CD14-positive monocyte (primary cell): ENCODE measurements at regions of chr4 and their contacts with region 1.

Region 1: GRCh38 chr4:99816545-99817308 is at the start of gene DAPP1:
- DNase-seq: peak; percentile 75 to 91 (median 84)
- H3K4me3 ChIP-seq: peak within 1 kb of the TSS; percentile 79 to 99 (median 90)
- H3K4me3 Mint-ChIP-seq: peak within 1 kb of the TSS; percentile 92 to 99
- H3K27ac ChIP-seq: peak within 1 kb of the TSS; percentile 85 to 94
- H3K27ac Mint-ChIP-seq: peak within 1 kb of the TSS; percentile 94 to 99 (median 96)
- H3K4me1 ChIP-seq: peaks cover 66 to 72% of the 10 kb centered on the region in 2 donors
- H3K4me1 Mint-ChIP-seq: peaks cover 66% of the 10 kb centered on the region
- H3K27me3 ChIP-seq: no peaks in the 10 kb centered on the region
- H3K27me3 Mint-ChIP-seq: no peaks in the 10 kb centered on the region
- CTCF ChIP-seq: no peak
- polyA plus RNA-seq, gene DAPP1: 63.1 to 125 (median 87.2) TPM

Region 2: GRCh38 chr4:99855678-99856077 is 39.0 kb after region 1 on chr4:
- intact Hi-C with region 1: loop called (anchors 2 to 5 kb)
- DNase-seq: peak; percentile 80 to 90 (median 89)
- H3K4me3 ChIP-seq: peak overlapping the region; percentile 7 to 66 (median 41)
- H3K4me3 Mint-ChIP-seq: peak overlapping the region in 1 of 2 donors; percentile 39
- H3K27ac ChIP-seq: peak overlapping the region; percentile 7 to 90
- H3K27ac Mint-ChIP-seq: peak overlapping the region; percentile 89 to 99 (median 97)
- H3K4me1 ChIP-seq: peaks cover 76 to 90% of the 10 kb centered on the region in 2 donors
- H3K4me1 Mint-ChIP-seq: peaks cover 80% of the 10 kb centered on the region
- H3K27me3 ChIP-seq: no peaks in the 10 kb centered on the region
- H3K27me3 Mint-ChIP-seq: peaks cover 0 to 1% (median 0%) of the 10 kb centered on the region in 3 donors
- CTCF ChIP-seq: no peak

Region 3: DNA sequence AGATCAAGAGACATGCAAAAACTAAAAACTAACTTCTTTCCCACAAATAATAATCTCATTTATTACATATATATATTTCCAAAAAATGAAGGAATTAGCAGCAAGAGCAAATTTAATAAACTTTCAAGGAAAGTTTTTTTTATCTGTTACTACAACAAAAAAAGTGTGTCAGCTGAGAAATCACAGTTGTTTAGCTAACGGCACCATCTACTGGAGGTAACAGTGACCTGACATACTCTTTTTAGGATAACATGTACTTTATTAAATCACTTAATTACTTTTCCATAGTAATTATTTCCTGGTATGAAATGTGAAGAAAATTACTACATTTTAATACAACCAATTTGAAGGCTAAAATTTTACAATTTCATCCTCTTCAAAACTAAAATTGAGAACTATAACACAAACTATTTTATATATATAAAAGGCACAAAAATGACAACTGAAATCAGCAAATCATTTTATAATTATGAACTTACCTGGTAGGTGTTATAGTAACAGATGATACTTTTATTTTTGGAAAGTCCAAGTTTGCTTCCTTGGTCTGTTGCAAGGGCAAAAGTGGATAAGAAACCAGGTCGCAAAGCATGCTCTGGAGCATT is 68.4 kb after region 1 on chr4:
- intact Hi-C with region 1: loop called (anchors 5 to 10 kb)
- DNase-seq: peak; percentile 28 to 56 (median 48)
- H3K4me3 ChIP-seq: no peak overlapping the region
- H3K4me3 Mint-ChIP-seq: no peak overlapping the region
- H3K27ac ChIP-seq: no peak overlapping the region
- H3K27ac Mint-ChIP-seq: no peak overlapping the region
- H3K4me1 ChIP-seq: no peaks in the 10 kb centered on the region
- H3K4me1 Mint-ChIP-seq: peaks cover 6% of the 10 kb centered on the region
- H3K27me3 ChIP-seq: no peaks in the 10 kb centered on the region
- H3K27me3 Mint-ChIP-seq: no peaks in the 10 kb centered on the region
- CTCF ChIP-seq: peak; percentile 74

Region 4: GRCh38 chr4:99949034-99949998 is 132.6 kb after region 1 on chr4:
- intact Hi-C with region 1: loop called in 1 of 2 experiments (anchors 5 kb)
- DNase-seq: peak; percentile 85 to 93 (median 88)
- H3K4me3 ChIP-seq: peak overlapping the region; percentile 58 to 82 (median 75)
- H3K4me3 Mint-ChIP-seq: no peak overlapping the region
- H3K27ac ChIP-seq: peak overlapping the region; percentile 83 to 86
- H3K27ac Mint-ChIP-seq: no peak overlapping the region
- H3K4me1 ChIP-seq: peaks cover 37 to 53% of the 10 kb centered on the region in 2 donors
- H3K4me1 Mint-ChIP-seq: peaks cover 33% of the 10 kb centered on the region
- H3K27me3 ChIP-seq: no peaks in the 10 kb centered on the region
- H3K27me3 Mint-ChIP-seq: no peaks in the 10 kb centered on the region
- CTCF ChIP-seq: peak; percentile 86

Region 5: GRCh38 chr4:100962698-100963097 is 1146.0 kb after region 1 on chr4:
- intact Hi-C with region 1: no loop called
- DNase-seq: no peak
- H3K4me3 ChIP-seq: no peak overlapping the region
- H3K4me3 Mint-ChIP-seq: no peak overlapping the region
- H3K27ac ChIP-seq: no peak overlapping the region
- H3K27ac Mint-ChIP-seq: no peak overlapping the region
- H3K4me1 ChIP-seq: no peaks in the 10 kb centered on the region
- H3K4me1 Mint-ChIP-seq: no peaks in the 10 kb centered on the region
- H3K27me3 ChIP-seq: no peaks in the 10 kb centered on the region
- H3K27me3 Mint-ChIP-seq: no peaks in the 10 kb centered on the region
- CTCF ChIP-seq: no peak